ENCODE measurements at regions of chr1 and their contacts with region 1.

Region 1: GRCh38 chr1:43214501-43215444 is 42.6 kb downstream of the CFAP57 start:
- DNase-seq: no peak
- ATAC-seq: no peak
- H3K4me3 Mint-ChIP-seq: no peak overlapping the region
- H3K27ac Mint-ChIP-seq: no peak overlapping the region
- H3K4me1 Mint-ChIP-seq: no peaks in the 10 kb centered on the region
- H3K27me3 Mint-ChIP-seq: no peaks in the 10 kb centered on the region
- CTCF ChIP-seq: no peak

Region 2: DNA sequence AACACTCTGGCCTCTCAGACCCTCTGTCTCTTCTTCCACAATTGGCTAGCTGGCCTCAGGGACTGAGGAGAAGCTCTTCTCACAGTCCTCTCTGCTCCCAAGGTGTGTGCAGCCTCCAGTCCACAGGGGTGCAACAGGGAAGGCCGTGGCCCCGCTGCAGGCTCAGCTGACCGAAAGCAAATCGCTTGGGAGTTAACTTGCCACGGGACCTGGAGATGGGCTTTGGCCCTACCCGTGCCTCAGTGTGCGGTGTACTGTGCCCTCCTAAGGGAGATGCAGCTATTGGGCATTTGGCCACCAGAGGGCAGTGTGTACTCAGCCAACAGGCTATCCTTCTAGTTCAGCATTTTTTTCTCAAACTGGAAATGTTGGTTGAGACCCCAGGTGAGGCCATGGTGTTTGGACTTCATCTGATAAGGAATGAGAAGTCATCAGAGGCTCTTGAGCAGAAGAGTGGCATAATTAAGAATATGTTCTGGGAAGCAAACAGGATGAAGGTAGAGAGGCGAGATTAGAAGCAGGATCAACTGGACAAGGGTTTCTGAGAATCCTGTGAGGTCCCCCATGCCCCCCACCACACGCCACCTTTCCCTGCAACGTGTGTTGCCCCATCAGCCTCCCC is 12.5 kb after region 1 on chr1:
- CTCF ChIA-PET with region 1: interaction called, 15 read pairs
- POLR2A ChIA-PET with region 1: no interaction called
- intact Hi-C with region 1: no loop called
- DNase-seq: peak; percentile 93
- ATAC-seq: peak; percentile 93
- H3K4me3 Mint-ChIP-seq: no peak overlapping the region
- H3K27ac Mint-ChIP-seq: no peak overlapping the region
- H3K4me1 Mint-ChIP-seq: no peaks in the 10 kb centered on the region
- H3K27me3 Mint-ChIP-seq: no peaks in the 10 kb centered on the region
- CTCF ChIP-seq: peak; percentile 83

Measured in activated CD8-positive, alpha-beta T cell treated with anti-CD3 and anti-CD28 coated beads for 36 hours (primary cell).